ENCODE measurements at regions of chr12 and their contacts with region 1.

Region 1: DNA sequence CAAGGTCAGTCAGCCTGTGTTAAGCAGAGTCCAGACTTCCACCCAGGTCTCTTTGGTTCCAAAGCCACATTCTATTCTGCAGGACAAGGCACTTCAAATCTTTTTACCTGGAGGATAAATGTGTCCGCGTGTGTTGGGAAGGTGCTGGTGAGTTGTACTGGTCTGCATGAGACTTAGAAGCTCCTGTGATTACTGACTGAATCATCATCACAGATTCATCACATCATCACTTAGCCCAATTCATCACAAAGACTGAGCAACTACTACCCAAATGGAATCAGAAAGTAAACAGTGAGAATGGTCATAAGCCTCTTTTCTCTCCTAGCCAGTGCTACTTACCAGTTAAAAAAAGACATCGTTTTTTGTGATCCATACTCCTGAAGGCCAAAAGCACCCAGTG is 5.3 kb downstream of the SLC15A5 start:
- DNase-seq: no peak
- ATAC-seq: no peak

Region 2: DNA sequence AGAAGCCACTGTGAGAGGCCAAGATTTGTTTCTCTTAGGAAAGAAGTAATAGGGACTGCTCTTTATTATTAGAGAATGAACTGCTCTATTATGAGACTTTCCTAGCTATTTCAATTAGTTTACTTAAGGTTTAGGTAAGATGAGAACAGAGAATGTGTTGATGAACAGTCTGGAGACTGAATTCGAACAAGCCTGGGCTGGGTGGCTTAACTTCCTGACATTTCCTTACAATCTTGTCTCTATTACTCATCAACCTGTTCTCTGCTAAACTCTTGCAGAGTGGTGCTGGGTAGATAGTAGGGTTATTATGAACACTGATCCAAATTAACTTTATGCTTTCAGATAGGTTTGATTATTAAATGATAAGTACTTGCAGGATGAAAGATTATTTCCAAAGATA is 26.0 kb before region 1 on chr12:
- intact Hi-C with region 1: loop called (anchors 1 kb)
- DNase-seq: no peak
- ATAC-seq: no peak

Region 3: GRCh38 chr12:16285586-16285985 is 13.4 kb after region 1 on chr12:
- intact Hi-C with region 1: no loop called
- DNase-seq: no peak
- ATAC-seq: no peak

Measured in sciatic nerve (tissue), 2 donors.